Activated CD4-positive, alpha-beta T cell treated with anti-CD3 and anti-CD28 coated beads, Interleukin-2, amount 10 ng/mL, durations not matched to agents 24 days and 14 days (primary cell): ENCODE measurements at regions of chr14 and their contacts with region 1.

Region 1: DNA sequence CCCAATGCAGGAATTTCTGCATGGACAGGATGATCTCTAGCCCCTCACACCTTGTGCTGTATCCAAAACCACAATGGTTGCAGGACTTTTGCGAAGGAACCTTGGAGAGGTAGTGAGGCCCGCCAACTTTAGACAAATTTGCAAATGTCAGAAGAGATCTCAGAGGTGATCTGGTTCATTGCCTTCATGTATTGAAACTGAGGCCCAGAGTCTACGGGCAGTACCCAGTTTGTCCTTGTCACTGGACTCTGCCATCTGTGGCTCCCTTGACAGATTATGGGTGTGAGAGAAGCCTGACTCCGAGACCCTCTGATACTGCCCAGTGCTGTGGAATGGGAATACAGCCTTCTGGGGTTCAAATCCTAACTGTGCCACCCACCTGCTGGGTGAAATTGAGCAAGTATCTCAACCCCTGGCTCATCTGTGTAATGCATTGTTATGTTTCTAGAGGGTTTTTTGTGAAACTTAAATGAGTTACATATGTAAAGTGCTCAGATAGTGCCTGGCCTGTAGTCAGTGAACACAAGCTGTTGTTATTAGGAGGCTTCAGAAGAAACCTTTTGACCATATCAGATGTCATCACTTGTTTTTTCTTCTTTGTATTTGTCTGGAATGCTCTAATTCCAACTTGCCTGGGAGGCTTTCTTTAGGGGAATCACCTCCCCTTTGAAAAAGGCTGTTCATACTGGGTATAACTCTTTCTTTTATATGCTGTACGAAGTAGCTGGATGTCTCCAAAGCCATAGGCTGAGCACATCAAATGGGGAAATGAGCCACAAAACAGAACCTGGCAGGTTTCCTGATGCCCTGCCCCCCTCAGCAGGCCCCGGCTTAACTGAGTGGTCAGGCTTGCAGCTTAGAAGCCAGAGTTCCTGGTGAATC is 71.4 kb upstream of the SRSF5 start:
- DNase-seq: no peak
- H3K4me3 Mint-ChIP-seq: peak overlapping the region; percentile 53
- H3K27ac Mint-ChIP-seq: peak overlapping the region; percentile 71
- H3K4me1 Mint-ChIP-seq: peaks cover 72% of the 10 kb centered on the region
- H3K27me3 Mint-ChIP-seq: no peaks in the 10 kb centered on the region

Region 2: GRCh38 chr14:69519204-69520100 is 176.1 kb before region 1 on chr14:
- intact Hi-C with region 1: no loop called
- DNase-seq: no peak
- H3K4me3 Mint-ChIP-seq: no peak overlapping the region
- H3K27ac Mint-ChIP-seq: no peak overlapping the region
- H3K4me1 Mint-ChIP-seq: no peaks in the 10 kb centered on the region
- H3K27me3 Mint-ChIP-seq: peaks cover 11% of the 10 kb centered on the region

Region 3: DNA sequence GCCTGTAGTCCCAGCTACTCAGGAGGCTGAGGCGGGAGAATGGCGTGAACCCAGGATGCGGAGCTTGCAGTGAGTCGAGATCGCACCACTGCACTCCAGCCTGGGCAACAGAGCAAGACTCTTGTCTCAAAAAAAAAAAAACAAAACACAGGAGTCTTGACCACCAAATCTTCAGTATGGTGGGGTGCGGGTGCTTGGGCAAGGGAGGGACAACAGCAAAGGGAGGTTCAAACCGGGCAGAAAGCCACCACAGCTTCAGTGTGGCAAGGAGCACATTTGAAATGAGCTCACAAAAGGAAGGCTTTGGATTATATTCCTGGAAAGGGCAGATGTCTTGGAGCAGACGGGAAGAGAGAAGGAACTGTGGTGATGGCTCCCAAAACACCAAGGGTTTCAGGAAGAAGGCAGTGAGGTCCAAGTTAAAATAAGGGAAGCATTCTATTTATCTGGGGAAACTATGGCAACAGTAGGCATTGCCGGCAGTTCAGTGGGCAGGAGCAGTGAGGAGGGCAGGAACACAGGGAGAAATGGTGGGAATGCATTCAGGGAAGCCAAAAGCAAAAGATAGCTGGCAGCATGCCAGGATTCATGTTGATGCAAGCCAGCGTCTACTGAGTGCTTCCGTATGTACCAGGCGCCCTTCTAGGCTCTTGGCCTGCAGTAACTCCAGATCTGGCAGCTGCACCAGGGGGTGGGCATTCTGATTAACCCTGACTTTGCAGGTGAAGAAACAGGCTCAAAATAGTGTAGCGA is 20.3 kb after region 1 on chr14:
- intact Hi-C with region 1: loop called (anchors 2 kb)
- DNase-seq: peak; percentile 70
- H3K4me3 Mint-ChIP-seq: peak overlapping the region; percentile 65
- H3K27ac Mint-ChIP-seq: peak overlapping the region; percentile 88
- H3K4me1 Mint-ChIP-seq: peaks cover 73% of the 10 kb centered on the region
- H3K27me3 Mint-ChIP-seq: no peaks in the 10 kb centered on the region

Region 4: GRCh38 chr14:69887740-69888657 is 192.4 kb after region 1 on chr14:
- intact Hi-C with region 1: no loop called
- DNase-seq: no peak
- H3K4me3 Mint-ChIP-seq: no peak overlapping the region
- H3K27ac Mint-ChIP-seq: no peak overlapping the region
- H3K4me1 Mint-ChIP-seq: no peaks in the 10 kb centered on the region
- H3K27me3 Mint-ChIP-seq: peaks cover 25% of the 10 kb centered on the region

Region 5: DNA sequence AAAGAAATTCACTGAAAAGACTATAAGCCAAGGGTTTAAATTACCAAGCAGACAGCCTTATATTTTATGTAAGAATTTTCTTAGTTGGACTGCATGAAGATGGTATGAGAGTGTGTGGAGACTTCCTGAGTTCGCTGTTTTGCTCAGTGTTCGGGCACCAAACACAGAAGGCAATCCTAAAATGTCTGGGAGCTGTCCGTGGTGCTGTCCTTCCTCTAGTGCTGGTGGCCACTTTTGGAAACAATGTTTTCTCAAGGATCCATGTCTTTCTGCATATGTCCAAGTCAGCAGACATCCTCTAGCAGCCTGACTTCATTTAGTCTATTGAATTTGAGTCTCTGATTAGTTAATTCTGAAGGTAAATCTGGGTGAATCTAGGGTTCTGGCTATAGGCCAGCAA is 357.4 kb after region 1 on chr14:
- intact Hi-C with region 1: no loop called
- DNase-seq: peak; percentile 76
- H3K4me3 Mint-ChIP-seq: no peak overlapping the region
- H3K27ac Mint-ChIP-seq: no peak overlapping the region
- H3K4me1 Mint-ChIP-seq: peaks cover 4% of the 10 kb centered on the region
- H3K27me3 Mint-ChIP-seq: no peaks in the 10 kb centered on the region